ENCODE measurements at regions of chr4 and their contacts with region 1.

Region 1: DNA sequence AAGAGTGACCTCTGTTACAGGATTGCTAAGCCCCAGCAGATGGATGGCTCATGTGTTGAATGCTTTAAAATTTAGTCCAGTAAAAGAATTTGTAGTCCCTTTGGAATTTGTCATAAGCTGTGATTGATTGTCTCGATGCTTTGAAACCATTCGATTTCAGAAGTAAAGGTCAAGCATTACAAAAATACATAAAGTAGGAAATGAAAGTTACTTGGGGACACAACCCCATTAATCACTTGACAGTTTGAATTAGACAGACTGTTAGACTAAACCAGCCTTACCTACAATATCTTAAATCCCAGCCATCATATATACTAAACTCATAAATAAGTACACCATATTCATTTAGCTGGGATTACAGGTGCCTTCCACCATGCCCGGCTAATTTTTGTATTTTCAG is 6.6 kb downstream of the REST start:
- DNase-seq: no peak
- ATAC-seq: no peak
- H3K4me3 ChIP-seq: no peak overlapping the region
- H3K27ac ChIP-seq: no peak overlapping the region
- H3K4me1 ChIP-seq: peaks cover 10% of the 10 kb centered on the region
- H3K27me3 ChIP-seq: no peaks in the 10 kb centered on the region
- CTCF ChIP-seq: no peak

Region 2: GRCh38 chr4:55965585-55965984 is 948.8 kb before region 1 on chr4:
- CTCF ChIA-PET with region 1: no interaction called
- POLR2A ChIA-PET with region 1: interaction called, 13 read pairs
- in situ Hi-C with region 1: no loop called
- intact Hi-C with region 1: no loop called
- DNase-seq: no peak
- ATAC-seq: no peak
- H3K4me3 ChIP-seq: no peak overlapping the region
- H3K27ac ChIP-seq: no peak overlapping the region
- H3K4me1 ChIP-seq: no peaks in the 10 kb centered on the region
- H3K27me3 ChIP-seq: no peaks in the 10 kb centered on the region
- CTCF ChIP-seq: no peak

Region 3: GRCh38 chr4:56587091-56587490 is 327.2 kb before region 1 on chr4:
- CTCF ChIA-PET with region 1: no interaction called
- POLR2A ChIA-PET with region 1: no interaction called
- in situ Hi-C with region 1: no loop called
- intact Hi-C with region 1: no loop called
- DNase-seq: no peak
- ATAC-seq: no peak
- H3K4me3 ChIP-seq: no peak overlapping the region
- H3K27ac ChIP-seq: no peak overlapping the region
- H3K4me1 ChIP-seq: no peaks in the 10 kb centered on the region
- H3K27me3 ChIP-seq: no peaks in the 10 kb centered on the region
- CTCF ChIP-seq: no peak

Region 4: GRCh38 chr4:56653461-56654237 is 260.7 kb before region 1 on chr4:
- CTCF ChIA-PET with region 1: no interaction called
- POLR2A ChIA-PET with region 1: no interaction called
- in situ Hi-C with region 1: no loop called
- intact Hi-C with region 1: no loop called
- DNase-seq: no peak
- ATAC-seq: no peak
- H3K4me3 ChIP-seq: no peak overlapping the region
- H3K27ac ChIP-seq: no peak overlapping the region
- H3K4me1 ChIP-seq: no peaks in the 10 kb centered on the region
- H3K27me3 ChIP-seq: peaks cover 15% of the 10 kb centered on the region
- CTCF ChIP-seq: no peak